Caco-2 (cell line): ENCODE measurements at regions of chr11 and their contacts with region 1.

Region 1: GRCh38 chr11:118401151-118401878 is at the start of gene ATP5MG:
- DNase-seq: peak; percentile 94 to 95
- H3K4me3 ChIP-seq: peak within 1 kb of the TSS; percentile 69
- H3K4me3 Mint-ChIP-seq: peak within 1 kb of the TSS; percentile 91
- H3K27ac Mint-ChIP-seq: peak within 1 kb of the TSS; percentile 95
- H3K4me1 ChIP-seq: peaks cover 12% of the 10 kb centered on the region
- H3K4me1 Mint-ChIP-seq: peaks cover 39% of the 10 kb centered on the region
- H3K27me3 ChIP-seq: no peaks in the 10 kb centered on the region
- H3K27me3 Mint-ChIP-seq: no peaks in the 10 kb centered on the region
- CTCF ChIP-seq: peak in 1 of 2 experiments; percentile 60
- total RNA-seq, gene ATP5MG: 537 and 576 TPM in 2 replicates

Region 2: GRCh38 chr11:118435893-118436624 is 34.7 kb after region 1 on chr11 and contains the start of gene KMT2A:
- CTCF ChIA-PET with region 1: interaction called, 4 read pairs
- POLR2A ChIA-PET with region 1: interaction called, 4 read pairs
- intact Hi-C with region 1: loop called (anchors 1 kb)
- DNase-seq: peak; percentile 100
- H3K4me3 ChIP-seq: peak within 1 kb of the TSS; percentile 97
- H3K4me3 Mint-ChIP-seq: peak within 1 kb of the TSS; percentile 82
- H3K27ac Mint-ChIP-seq: peak within 1 kb of the TSS; percentile 88
- H3K4me1 ChIP-seq: peaks cover 24% of the 10 kb centered on the region
- H3K4me1 Mint-ChIP-seq: peaks cover 27% of the 10 kb centered on the region
- H3K27me3 ChIP-seq: no peaks in the 10 kb centered on the region
- H3K27me3 Mint-ChIP-seq: no peaks in the 10 kb centered on the region
- CTCF ChIP-seq: peak in 1 of 2 experiments; percentile 15
- total RNA-seq, gene KMT2A: 93.9 and 107 TPM in 2 replicates

Region 3: GRCh38 chr11:118565051-118565450 is 163.7 kb after region 1 on chr11:
- CTCF ChIA-PET with region 1: no interaction called
- POLR2A ChIA-PET with region 1: no interaction called
- intact Hi-C with region 1: loop called (anchors 5 kb)
- DNase-seq: no peak
- H3K4me3 ChIP-seq: 0 out of 2 replicates have a peak overlapping the region, but pooled peaks have one; percentile 6
- H3K4me3 Mint-ChIP-seq: peak overlapping the region; percentile 95
- H3K27ac Mint-ChIP-seq: no peak overlapping the region
- H3K4me1 ChIP-seq: no peaks in the 10 kb centered on the region
- H3K4me1 Mint-ChIP-seq: peaks cover 9% of the 10 kb centered on the region
- H3K27me3 ChIP-seq: no peaks in the 10 kb centered on the region
- H3K27me3 Mint-ChIP-seq: no peaks in the 10 kb centered on the region
- CTCF ChIP-seq: no peak

Region 4: DNA sequence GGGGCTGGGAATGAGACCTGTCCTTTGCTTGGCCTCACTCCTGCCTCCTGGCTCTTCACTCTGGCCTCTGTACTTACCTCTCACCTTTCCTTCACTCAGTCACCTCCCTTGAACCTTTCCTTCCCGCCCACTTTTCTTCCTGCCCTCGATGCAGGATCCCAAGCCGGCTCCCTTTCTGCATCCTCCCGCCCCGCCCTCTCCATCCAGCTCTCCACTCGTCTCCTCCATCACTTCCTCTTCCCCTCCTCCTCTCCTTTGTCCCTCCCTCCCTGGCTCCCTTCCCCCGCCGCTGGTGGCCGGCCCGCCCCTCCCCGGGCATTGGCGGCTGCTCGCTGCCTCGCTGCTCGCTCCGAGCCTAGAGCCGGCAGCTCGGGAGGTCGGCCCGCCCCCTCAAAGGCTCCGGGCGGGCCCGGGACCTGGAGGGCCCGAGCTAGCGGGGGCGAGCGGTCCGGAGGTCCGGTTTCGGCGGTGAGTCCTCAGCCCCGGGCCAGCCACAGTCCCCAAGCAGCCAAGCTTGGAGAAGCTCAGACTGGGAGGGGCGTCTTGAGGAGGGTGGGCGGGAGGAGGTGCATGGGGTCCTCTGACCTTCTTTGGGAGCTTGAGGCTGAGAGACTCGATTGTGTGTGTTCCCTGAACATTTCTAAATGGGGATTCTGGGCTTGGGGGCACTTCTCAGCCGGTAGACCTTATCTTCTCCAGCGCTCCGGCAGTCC is 219.9 kb after region 1 on chr11:
- CTCF ChIA-PET with region 1: no interaction called
- POLR2A ChIA-PET with region 1: no interaction called
- intact Hi-C with region 1: no loop called
- DNase-seq: peak; percentile 96 to 97
- H3K4me3 ChIP-seq: peak overlapping the region; percentile 63
- H3K4me3 Mint-ChIP-seq: peak overlapping the region; percentile 87
- H3K27ac Mint-ChIP-seq: peak overlapping the region; percentile 93
- H3K4me1 ChIP-seq: peaks cover 49% of the 10 kb centered on the region
- H3K4me1 Mint-ChIP-seq: peaks cover 37% of the 10 kb centered on the region
- H3K27me3 ChIP-seq: no peaks in the 10 kb centered on the region
- H3K27me3 Mint-ChIP-seq: no peaks in the 10 kb centered on the region
- CTCF ChIP-seq: no peak